ENCODE measurements at regions of chr2 and their contacts with region 1.

Region 1: DNA sequence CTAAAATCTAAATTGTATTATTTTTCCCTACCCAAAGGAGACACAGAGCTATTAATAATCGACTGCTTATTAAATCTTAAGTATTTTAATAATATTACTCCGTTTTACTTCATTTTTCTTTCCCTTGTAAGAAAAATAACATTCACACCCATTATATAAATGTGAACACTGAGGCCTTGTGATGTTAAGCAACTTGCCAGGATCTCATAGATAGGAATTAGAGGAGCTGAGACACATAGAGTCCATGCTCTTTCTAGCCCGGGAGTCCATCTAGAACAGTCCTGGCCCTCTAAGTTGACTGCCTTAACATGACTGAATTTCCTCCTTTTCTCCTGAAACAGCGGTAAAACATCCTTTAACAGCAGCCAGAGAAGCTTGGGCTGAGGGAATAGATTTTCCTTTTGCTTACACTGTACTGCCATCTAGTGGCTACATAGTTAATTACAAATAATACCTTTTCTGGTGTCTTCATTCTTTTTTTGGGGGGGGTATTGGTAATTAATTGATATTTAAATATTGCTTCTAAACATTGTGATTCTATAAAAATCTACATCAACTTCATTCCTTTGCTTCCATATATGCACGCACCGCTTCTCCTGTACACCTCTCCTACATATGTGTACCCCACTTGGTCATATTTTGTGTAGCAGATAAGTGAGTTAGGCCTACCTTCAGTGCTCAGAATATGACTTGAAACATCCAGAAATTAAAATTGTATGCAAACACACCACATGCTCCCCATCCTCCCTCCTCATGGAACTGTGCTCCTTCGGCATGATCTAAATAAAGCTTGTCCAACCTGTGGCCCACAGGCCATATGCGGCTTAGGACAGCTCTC is 125.8 kb upstream of the HNMT start:
- DNase-seq: peak; percentile 51
- H3K4me3 ChIP-seq: no peak overlapping the region
- H3K27ac ChIP-seq: no peak overlapping the region
- H3K4me1 ChIP-seq: no peaks in the 10 kb centered on the region
- H3K27me3 ChIP-seq: no peaks in the 10 kb centered on the region; the same call in 1 of the 2 replicates
- CTCF ChIP-seq: peak; percentile 81
- EP300 ChIP-seq: no peak
- RAD21 ChIP-seq: peak; percentile 93

Region 2: GRCh38 chr2:136423516-136423996 is 1414.9 kb before region 1 on chr2:
- CTCF ChIA-PET with region 1: interaction called, 14 read pairs
- POLR2A ChIA-PET with region 1: no interaction called
- DNase-seq: peak; percentile 85
- H3K4me3 ChIP-seq: peak overlapping the region; percentile 51 to 64
- H3K27ac ChIP-seq: no peak overlapping the region
- H3K4me1 ChIP-seq: no peaks in the 10 kb centered on the region; a peak in 1 of 4 replicates
- H3K27me3 ChIP-seq: no peaks in the 10 kb centered on the region
- CTCF ChIP-seq: peak; percentile 81
- EP300 ChIP-seq: no peak
- RAD21 ChIP-seq: peak; percentile 86

Region 3: DNA sequence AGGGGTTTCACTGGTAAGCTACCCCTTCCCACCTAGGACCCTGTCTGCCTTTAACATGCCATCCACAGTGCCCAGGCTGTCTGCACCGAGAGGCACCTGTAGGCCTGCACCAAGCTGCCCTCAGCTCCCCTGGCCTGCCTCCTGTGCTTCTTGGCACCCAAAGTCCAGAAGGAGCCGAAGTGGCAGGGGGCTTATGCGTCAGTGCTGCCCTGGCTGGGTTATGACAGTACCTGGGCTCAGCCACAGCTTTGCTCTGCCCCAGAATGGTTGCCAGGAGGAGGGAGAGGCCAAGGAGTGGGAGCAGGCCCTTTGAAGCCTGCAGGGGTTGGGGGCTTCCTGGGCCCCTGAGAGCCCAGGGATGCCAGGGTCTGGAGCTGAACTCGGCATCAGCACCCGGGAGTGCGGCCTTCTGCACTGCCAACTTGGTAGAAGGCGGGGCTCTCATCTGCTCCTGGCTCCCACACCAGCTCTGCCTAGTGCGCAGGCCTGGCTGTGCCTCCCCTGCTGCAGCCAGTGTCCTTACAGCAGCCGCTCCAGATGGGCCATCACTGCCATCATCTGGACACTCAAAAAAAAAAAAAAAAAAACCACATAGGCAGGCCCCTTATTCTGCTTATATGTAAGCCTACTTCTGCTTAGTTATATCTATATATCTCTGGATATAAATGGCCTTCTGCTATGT is 917.7 kb before region 1 on chr2:
- CTCF ChIA-PET with region 1: interaction called, 12 read pairs
- POLR2A ChIA-PET with region 1: no interaction called
- DNase-seq: peak; percentile 76
- H3K4me3 ChIP-seq: no peak overlapping the region
- H3K27ac ChIP-seq: no peak overlapping the region
- H3K4me1 ChIP-seq: peaks cover 0 to 3% of the 10 kb centered on the region in 2 experiments; a peak in 1 of 4 replicates
- H3K27me3 ChIP-seq: no peaks in the 10 kb centered on the region
- CTCF ChIP-seq: no peak
- EP300 ChIP-seq: no peak
- RAD21 ChIP-seq: peak; percentile 81

Region 4: DNA sequence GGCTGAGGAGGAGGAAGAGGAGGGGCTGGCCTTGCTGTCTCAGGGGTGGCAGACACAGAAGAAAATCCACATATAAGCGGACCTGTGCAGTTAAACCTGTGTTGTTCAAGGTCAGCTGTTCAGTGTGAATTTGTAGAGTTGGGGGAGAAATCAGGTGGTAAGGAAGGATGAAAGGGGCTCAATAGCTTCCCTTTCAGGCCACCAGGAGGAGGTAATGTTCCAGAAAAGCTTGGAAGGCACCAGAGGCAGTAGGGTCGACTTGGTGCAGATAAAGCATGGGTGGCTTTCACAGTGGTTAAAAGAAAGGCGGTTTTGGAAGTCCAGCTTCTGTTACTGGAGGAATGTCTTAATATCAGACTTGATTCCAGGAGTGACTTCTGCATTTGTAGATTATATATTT is 905.8 kb before region 1 on chr2:
- CTCF ChIA-PET with region 1: interaction called, 64 read pairs
- POLR2A ChIA-PET with region 1: no interaction called
- DNase-seq: peak; percentile 49
- H3K4me3 ChIP-seq: no peak overlapping the region
- H3K27ac ChIP-seq: no peak overlapping the region
- H3K4me1 ChIP-seq: peaks cover 0 to 2% of the 10 kb centered on the region in 2 experiments; a peak in 2 of 4 replicates
- H3K27me3 ChIP-seq: no peaks in the 10 kb centered on the region
- CTCF ChIP-seq: peak; percentile 63
- EP300 ChIP-seq: no peak
- RAD21 ChIP-seq: peak; percentile 92

Region 5: DNA sequence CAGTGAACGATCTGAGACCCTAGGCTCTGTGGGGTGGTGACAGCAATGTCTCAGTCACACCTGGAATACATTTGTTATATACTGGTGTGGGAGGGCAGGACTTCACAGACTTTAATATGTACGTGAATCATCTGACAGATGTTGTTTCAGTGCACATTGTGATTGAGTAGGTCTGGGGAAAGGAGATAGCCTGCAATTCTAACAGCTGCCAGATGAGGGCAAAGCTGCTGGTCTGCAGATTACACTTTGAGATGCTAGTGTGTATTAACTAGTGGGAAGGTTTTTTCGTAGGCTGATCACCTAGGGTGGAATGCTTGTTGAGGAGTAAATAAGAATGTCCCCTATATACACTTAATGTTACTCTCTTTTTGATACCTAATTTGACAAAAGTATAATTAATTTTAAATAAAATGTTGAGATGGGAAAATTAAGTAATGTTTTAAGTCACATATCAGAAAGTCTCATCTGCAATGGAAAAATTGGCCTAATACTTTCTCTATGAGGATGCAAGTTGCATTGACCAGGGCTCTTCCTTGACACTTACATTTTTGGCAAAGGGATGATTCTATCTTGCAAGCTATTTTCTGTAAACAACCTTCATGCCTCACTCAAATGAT is 371.1 kb before region 1 on chr2:
- CTCF ChIA-PET with region 1: interaction called, 22 read pairs
- POLR2A ChIA-PET with region 1: no interaction called
- DNase-seq: peak; percentile 44
- H3K4me3 ChIP-seq: no peak overlapping the region
- H3K27ac ChIP-seq: no peak overlapping the region
- H3K4me1 ChIP-seq: no peaks in the 10 kb centered on the region
- H3K27me3 ChIP-seq: no peaks in the 10 kb centered on the region
- CTCF ChIP-seq: peak; percentile 63
- EP300 ChIP-seq: no peak
- RAD21 ChIP-seq: peak; percentile 71

Region 6: GRCh38 chr2:137826373-137827372 is 11.8 kb before region 1 on chr2:
- CTCF ChIA-PET with region 1: interaction called, 28 read pairs
- POLR2A ChIA-PET with region 1: no interaction called
- DNase-seq: no peak
- H3K4me3 ChIP-seq: no peak overlapping the region
- H3K27ac ChIP-seq: no peak overlapping the region
- H3K4me1 ChIP-seq: no peaks in the 10 kb centered on the region
- H3K27me3 ChIP-seq: no peaks in the 10 kb centered on the region
- CTCF ChIP-seq: no peak
- EP300 ChIP-seq: no peak
- RAD21 ChIP-seq: no peak

Region 7: GRCh38 chr2:137870682-137871081 is 32.2 kb after region 1 on chr2:
- CTCF ChIA-PET with region 1: no interaction called
- POLR2A ChIA-PET with region 1: no interaction called
- DNase-seq: no peak
- H3K4me3 ChIP-seq: no peak overlapping the region
- H3K27ac ChIP-seq: no peak overlapping the region
- H3K4me1 ChIP-seq: no peaks in the 10 kb centered on the region
- H3K27me3 ChIP-seq: no peaks in the 10 kb centered on the region
- CTCF ChIP-seq: no peak
- EP300 ChIP-seq: no peak
- RAD21 ChIP-seq: no peak

Measured in SK-N-SH (cell line).